Natural killer cell (primary cell): ENCODE measurements at regions of chr1 and their contacts with region 1.

Region 1: DNA sequence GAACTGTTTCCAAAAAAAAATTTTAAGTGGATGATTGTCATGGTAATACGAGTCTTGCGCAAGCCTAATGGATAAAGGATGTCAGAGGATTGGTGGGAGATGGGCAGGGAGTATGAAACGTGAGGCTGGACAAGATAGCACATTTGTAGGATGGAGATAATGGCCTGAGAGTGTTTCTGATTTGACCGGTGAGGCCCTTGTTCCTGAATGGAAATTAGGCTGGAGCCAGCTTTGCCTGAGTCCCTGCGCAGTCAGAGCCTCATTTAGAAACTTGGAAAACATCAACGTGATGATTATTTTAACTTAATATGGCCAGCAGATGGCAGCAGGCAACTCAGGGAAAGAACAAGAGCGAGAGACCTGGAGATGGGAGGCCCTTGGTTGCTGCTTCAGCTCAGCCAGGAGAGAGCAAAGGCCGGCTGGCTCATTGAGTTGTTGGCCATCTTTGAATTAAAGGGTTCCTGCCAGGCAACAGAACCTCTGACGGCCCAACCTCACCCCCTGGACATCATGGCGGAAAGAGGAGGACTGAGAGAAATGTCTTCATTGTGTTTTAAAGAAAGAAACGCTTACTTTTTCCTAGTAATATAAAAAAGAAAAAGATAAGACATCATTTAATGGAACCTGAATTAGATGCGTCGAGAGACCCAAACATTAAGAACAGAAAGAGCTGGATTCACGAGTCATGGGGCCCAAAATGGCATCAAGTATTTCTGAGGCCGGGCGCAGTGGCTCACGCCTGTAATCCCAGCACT is 80.3 kb downstream of the SELENOF start:
- DNase-seq: peak; percentile 20 to 80
- ATAC-seq: peak; percentile 68 to 73 (median 70)
- H3K4me3 ChIP-seq: no peak overlapping the region
- H3K4me3 Mint-ChIP-seq: no peak overlapping the region
- H3K27ac ChIP-seq: no peak overlapping the region
- H3K27ac Mint-ChIP-seq: no peak overlapping the region
- H3K4me1 ChIP-seq: peaks cover 2% of the 10 kb centered on the region
- H3K4me1 Mint-ChIP-seq: peaks cover 5 to 7% of the 10 kb centered on the region in 2 donors
- H3K27me3 ChIP-seq: no peaks in the 10 kb centered on the region
- H3K27me3 Mint-ChIP-seq: peaks cover 4 to 8% of the 10 kb centered on the region in 2 donors
- CTCF ChIP-seq: peak; percentile 73

Region 2: GRCh38 chr1:86811142-86811924 is 22.3 kb before region 1 on chr1:
- intact Hi-C with region 1: no loop called
- DNase-seq: no peak
- ATAC-seq: no peak
- H3K4me3 ChIP-seq: no peak overlapping the region
- H3K4me3 Mint-ChIP-seq: no peak overlapping the region
- H3K27ac ChIP-seq: no peak overlapping the region
- H3K27ac Mint-ChIP-seq: no peak overlapping the region
- H3K4me1 ChIP-seq: no peaks in the 10 kb centered on the region
- H3K4me1 Mint-ChIP-seq: no peaks in the 10 kb centered on the region
- H3K27me3 ChIP-seq: no peaks in the 10 kb centered on the region
- H3K27me3 Mint-ChIP-seq: peaks cover 0 to 2% of the 10 kb centered on the region in 2 donors
- CTCF ChIP-seq: no peak

Region 3: GRCh38 chr1:86965012-86965826 is 131.6 kb after region 1 on chr1:
- intact Hi-C with region 1: loop called (anchors 1 kb)
- DNase-seq: peak in 1 of 2 donors; percentile 56
- ATAC-seq: peak in 1 of 3 donors; percentile 25
- H3K4me3 ChIP-seq: no peak overlapping the region
- H3K4me3 Mint-ChIP-seq: no peak overlapping the region
- H3K27ac ChIP-seq: no peak overlapping the region
- H3K27ac Mint-ChIP-seq: no peak overlapping the region
- H3K4me1 ChIP-seq: no peaks in the 10 kb centered on the region
- H3K4me1 Mint-ChIP-seq: no peaks in the 10 kb centered on the region
- H3K27me3 ChIP-seq: no peaks in the 10 kb centered on the region
- H3K27me3 Mint-ChIP-seq: no peaks in the 10 kb centered on the region
- CTCF ChIP-seq: peak; percentile 45

Region 4: DNA sequence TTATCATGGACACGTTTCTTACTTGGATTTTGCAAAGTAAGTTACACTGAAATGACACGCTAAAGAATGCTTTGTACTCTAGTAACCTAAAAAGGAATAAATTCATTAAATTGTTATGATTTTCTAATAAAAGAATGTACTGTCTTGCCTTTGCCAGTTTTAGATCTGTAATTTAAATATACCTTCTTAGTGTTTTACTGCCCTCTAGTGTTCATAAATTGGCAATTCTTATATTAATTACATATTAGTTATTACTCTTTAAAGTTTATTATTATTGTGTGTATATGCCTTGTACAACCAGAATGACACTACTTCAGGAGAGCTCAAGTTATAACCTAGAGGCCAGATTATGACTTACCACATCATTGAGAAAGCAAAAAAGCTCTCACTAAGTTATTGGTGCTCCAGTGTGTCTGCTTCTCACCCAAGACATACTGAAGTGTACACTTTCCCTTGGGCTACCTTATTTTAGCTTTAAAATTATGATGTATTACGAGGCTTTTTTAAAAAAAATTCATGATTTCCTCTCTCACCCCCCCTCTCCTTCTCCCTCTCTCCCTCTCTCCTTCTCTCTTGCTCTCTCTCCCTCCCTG is 250.7 kb after region 1 on chr1:
- intact Hi-C with region 1: loop called (anchors 1 kb)
- DNase-seq: peak in 1 of 2 donors; percentile 57
- ATAC-seq: peak in 1 of 3 donors; percentile 36
- H3K4me3 ChIP-seq: no peak overlapping the region
- H3K4me3 Mint-ChIP-seq: no peak overlapping the region
- H3K27ac ChIP-seq: no peak overlapping the region
- H3K27ac Mint-ChIP-seq: no peak overlapping the region
- H3K4me1 ChIP-seq: no peaks in the 10 kb centered on the region
- H3K4me1 Mint-ChIP-seq: peaks cover 2 to 6% of the 10 kb centered on the region in 2 donors
- H3K27me3 ChIP-seq: no peaks in the 10 kb centered on the region
- H3K27me3 Mint-ChIP-seq: no peaks in the 10 kb centered on the region
- CTCF ChIP-seq: peak; percentile 72